HAP-1 (cell line): ENCODE measurements at regions of chr19 and their contacts with region 1.

Region 1: DNA sequence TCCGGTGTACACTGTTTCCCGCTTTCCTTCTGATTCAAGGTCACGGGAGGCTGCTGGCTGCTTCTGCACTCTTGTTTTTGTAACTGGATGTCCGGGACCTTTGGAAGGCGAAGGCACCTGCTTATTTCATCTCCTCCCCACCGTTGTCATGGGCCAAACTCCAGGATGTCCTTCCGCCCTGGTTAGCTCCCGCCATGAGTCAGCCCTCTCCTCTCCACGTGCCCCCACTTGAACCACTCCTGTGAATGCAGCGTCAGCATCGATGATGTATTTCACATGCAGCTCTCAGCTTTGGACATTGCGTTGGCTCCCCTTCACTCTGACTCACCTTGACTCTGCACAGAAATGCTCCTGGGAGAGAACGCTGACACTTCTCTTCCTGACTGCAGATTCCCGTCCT is 5.5 kb upstream of the GALP start:
- DNase-seq: no peak
- H3K4me3 ChIP-seq: no peak overlapping the region
- H3K4me1 ChIP-seq: no peaks in the 10 kb centered on the region
- H3K27me3 ChIP-seq: no peaks in the 10 kb centered on the region

Region 2: DNA sequence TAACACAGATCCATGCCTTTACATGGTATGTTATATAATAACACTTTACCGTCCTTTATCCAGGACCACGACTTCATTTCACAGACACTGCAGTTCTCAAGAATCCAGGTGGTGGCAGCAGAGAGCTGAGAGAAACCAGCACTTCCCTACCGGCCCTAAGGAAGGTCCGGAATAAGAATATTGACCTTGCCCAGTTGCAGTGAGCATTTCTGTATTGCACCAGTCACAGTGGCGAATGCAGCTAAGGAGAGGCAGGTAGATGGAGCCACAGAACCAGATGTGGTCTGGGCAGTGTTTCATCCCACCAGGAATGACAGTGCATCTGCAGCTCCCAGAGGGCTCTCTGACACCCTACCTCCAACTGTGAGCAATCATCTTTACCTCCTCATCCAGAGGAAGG is 93.8 kb before region 1 on chr19:
- in situ Hi-C with region 1: loop called (anchors 10 kb)
- DNase-seq: peak; percentile 36 to 74
- H3K4me3 ChIP-seq: no peak overlapping the region
- H3K4me1 ChIP-seq: no peaks in the 10 kb centered on the region
- H3K27me3 ChIP-seq: no peaks in the 10 kb centered on the region

Region 3: DNA sequence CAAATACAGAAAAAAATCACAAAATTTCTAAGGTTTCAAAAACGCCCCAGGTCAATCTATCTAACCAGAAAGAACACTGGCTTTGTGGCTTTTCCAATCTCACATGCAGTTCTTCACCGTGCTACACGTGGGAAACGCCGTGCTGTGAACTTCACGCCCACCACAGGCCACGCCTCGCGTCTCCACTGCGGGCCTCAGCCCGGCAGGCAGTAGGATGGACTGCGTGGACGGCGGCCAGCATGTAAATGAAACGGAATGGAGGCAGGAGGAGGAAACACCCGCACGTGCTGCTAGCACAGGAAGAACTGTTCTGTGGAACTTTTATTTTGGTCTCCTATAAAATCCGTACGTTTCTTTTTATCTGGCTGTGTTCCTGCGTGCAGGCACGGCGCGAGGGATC is 73.0 kb before region 1 on chr19:
- in situ Hi-C with region 1: loop called (anchors 5 kb)
- DNase-seq: no peak
- H3K4me3 ChIP-seq: no peak overlapping the region
- H3K4me1 ChIP-seq: no peaks in the 10 kb centered on the region
- H3K27me3 ChIP-seq: no peaks in the 10 kb centered on the region

Region 4: DNA sequence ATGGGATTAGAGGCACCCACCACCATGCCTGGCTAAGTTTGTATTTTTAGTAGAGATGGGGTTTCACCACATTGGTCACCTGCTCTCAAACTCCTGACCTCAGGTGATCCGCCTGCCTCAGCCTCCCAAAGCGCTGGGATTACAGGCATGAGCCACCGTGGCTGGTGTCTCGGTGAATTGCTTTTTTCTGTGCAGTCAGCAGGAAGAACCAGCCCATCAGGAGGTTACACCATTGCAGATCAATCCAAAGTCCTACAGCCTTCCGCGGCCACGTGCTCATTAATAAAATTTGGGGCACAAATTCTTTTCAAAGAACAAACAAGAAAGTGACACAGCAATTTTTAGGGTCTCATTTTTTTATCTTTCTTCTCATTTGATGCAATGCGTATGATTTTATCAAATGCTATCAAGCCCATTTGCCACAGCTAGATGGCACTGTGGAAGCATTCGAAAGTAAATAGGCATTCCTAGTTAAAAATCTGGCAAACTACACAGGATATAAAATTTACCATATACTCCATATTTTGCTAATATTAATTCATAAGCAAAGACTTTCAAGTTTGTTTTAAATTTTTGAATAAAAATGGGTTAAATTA is 555.7 kb after region 1 on chr19:
- in situ Hi-C with region 1: no loop called
- DNase-seq: no peak
- H3K4me3 ChIP-seq: no peak overlapping the region
- H3K4me1 ChIP-seq: no peaks in the 10 kb centered on the region
- H3K27me3 ChIP-seq: no peaks in the 10 kb centered on the region